ENCODE measurements at regions of chr7 and their contacts with region 1.

Region 1: DNA sequence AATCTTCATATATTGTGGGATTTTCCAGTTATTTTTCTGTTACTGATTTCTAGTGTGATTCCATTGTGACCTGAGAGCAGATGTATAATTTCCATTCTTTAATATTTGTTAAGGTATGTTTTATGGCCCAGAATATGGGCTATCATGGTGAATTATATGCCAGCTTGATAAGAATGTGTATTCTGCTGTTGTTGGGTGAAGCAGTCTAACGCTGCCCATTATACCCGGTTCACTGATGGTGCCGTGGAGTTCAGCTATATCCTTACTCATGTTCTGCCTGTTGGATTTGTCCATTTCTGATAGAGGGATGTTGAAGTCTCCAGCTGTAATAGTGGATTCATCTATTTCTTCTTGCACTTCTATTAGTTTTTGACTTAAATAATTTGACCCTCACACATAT is 41.7 kb downstream of the DYNC2I1 start:
- DNase-seq: no peak
- H3K4me3 ChIP-seq: no peak overlapping the region
- H3K4me3 Mint-ChIP-seq: no peak overlapping the region
- H3K27ac ChIP-seq: no peak overlapping the region
- H3K27ac Mint-ChIP-seq: peak overlapping the region in 1 of 7 donors; percentile 27
- H3K4me1 ChIP-seq: no peaks in the 10 kb centered on the region
- H3K4me1 Mint-ChIP-seq: peaks cover 6 to 10% (median 7%) of the 10 kb centered on the region in 4 donors
- H3K27me3 ChIP-seq: no peaks in the 10 kb centered on the region
- H3K27me3 Mint-ChIP-seq: no peaks in the 10 kb centered on the region

Region 2: GRCh38 chr7:158289761-158290523 is 608.1 kb before region 1 on chr7:
- CTCF ChIA-PET with region 1: no interaction called
- POLR2A ChIA-PET with region 1: no interaction called
- intact Hi-C with region 1: no loop called
- DNase-seq: no peak
- H3K4me3 ChIP-seq: no peak overlapping the region
- H3K4me3 Mint-ChIP-seq: no peak overlapping the region
- H3K27ac ChIP-seq: no peak overlapping the region
- H3K27ac Mint-ChIP-seq: peak overlapping the region in 1 of 7 donors; percentile 54
- H3K4me1 ChIP-seq: no peaks in the 10 kb centered on the region
- H3K4me1 Mint-ChIP-seq: no peaks in the 10 kb centered on the region
- H3K27me3 ChIP-seq: no peaks in the 10 kb centered on the region
- H3K27me3 Mint-ChIP-seq: peaks cover 0 to 2% of the 10 kb centered on the region in 2 donors

Region 3: GRCh38 chr7:158646766-158647447 is 251.1 kb before region 1 on chr7:
- CTCF ChIA-PET with region 1: interaction called, 3 read pairs
- POLR2A ChIA-PET with region 1: no interaction called
- intact Hi-C with region 1: loop called (anchors 5 kb)
- DNase-seq: no peak
- H3K4me3 ChIP-seq: no peak overlapping the region
- H3K4me3 Mint-ChIP-seq: no peak overlapping the region
- H3K27ac ChIP-seq: no peak overlapping the region
- H3K27ac Mint-ChIP-seq: no peak overlapping the region
- H3K4me1 ChIP-seq: no peaks in the 10 kb centered on the region
- H3K4me1 Mint-ChIP-seq: no peaks in the 10 kb centered on the region
- H3K27me3 ChIP-seq: no peaks in the 10 kb centered on the region
- H3K27me3 Mint-ChIP-seq: no peaks in the 10 kb centered on the region